HCT116 (cell line): ENCODE measurements at regions of chr4 and their contacts with region 1.

Region 1: GRCh38 chr4:48546336-48546735 is 56.3 kb downstream of the ZAR1 start:
- DNase-seq: peak; percentile 12
- ATAC-seq: no peak
- H3K4me3 ChIP-seq: no peak overlapping the region
- H3K27ac ChIP-seq: no peak overlapping the region
- H3K4me1 ChIP-seq: no peaks in the 10 kb centered on the region
- H3K27me3 ChIP-seq: no peaks in the 10 kb centered on the region
- CTCF ChIP-seq: peak; percentile 47 to 66 (median 59); a peak in 4 of 6 replicates
- POLR2A ChIP-seq: no peak
- RAD21 ChIP-seq: peak; percentile 76

Region 2: DNA sequence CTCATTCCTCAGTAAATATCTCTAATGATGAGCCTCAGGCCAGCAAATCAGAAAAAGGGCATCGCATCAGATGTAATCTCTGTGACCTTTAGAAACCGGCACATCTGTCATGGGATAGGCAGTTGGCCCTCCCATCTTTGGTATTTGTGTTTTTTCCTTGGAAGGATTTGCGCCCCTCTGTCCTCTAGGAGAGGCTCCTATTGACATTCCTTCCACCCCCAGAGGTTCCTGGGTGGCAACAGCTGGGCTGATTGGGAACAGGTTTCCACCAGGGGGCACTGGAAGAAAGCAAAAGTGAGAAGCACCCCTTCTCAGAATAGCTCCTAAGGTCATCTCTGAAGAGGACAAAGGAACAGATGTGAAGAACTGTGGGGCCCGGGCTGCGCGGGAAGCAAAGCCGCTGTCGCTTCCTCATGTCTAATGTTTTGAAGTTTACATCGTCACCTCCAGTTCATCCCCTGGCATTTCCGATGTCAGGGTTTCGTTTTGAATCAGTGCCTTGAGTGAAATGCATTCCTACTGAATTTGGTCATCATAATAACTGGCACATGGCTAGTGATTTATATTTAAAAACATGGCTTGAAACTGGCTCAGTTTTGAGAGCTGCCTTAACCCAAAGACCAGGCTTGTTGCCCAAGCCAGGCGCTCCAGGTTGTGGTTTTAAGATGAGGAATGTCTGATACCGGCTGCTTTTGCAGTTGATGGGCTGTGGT is 418.5 kb before region 1 on chr4:
- CTCF ChIA-PET with region 1: interaction called, 21 read pairs
- POLR2A ChIA-PET with region 1: no interaction called
- RAD21 ChIA-PET with region 1: interaction called in 1 of 2 experiments, 4 read pairs
- intact Hi-C with region 1: loop called (anchors 1 kb)
- DNase-seq: peak; percentile 72
- ATAC-seq: peak; percentile 88
- H3K4me3 ChIP-seq: peak overlapping the region in 1 of 2 experiments; percentile 32; a peak in 3 of 4 replicates
- H3K27ac ChIP-seq: peak overlapping the region; percentile 38; the same call in 1 of the 2 replicates
- H3K4me1 ChIP-seq: peaks cover 32 to 38% of the 10 kb centered on the region in 2 experiments
- H3K27me3 ChIP-seq: no peaks in the 10 kb centered on the region
- CTCF ChIP-seq: peak; percentile 72 to 84 (median 80)
- POLR2A ChIP-seq: no peak
- RAD21 ChIP-seq: peak; percentile 85

Region 3: DNA sequence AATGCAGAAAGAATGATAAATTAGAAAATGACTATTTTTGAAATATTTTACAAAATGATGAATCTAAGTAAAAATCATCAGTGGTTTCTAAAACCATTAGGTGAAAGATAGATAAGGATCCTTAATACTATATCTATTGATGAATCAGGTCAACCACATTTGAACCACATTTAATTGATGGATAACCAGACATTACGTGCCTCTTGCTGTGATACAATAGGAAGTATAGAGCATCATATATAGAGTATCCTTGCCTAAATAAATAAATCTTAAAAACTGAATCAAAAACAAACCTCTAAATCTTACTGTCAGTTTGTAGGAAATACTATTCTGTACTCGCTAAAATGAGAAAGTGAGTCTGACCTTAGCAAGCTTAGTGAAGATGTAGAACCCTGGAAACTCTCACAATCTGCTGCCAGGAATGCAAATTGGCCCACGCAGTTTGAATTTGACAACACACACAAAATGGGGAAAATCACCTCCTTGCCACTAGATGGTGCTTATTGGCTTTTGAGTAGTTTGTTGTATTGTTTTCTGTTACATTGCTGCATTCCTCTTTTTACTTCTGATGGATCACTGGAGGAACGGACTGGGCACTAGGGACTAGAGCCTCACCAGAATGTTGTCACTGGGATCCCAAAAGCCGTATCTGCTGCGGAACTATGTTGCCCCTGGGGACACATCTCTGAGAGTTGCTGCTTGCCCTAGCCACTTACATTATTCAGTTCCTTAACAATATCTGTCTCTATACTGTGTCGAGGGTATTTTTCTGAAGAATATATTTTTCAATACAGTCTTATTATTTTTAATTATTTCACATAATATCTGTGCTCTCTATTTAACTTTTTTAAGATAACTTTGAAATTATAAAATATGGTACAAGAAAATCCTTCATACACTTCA is 230.4 kb before region 1 on chr4:
- CTCF ChIA-PET with region 1: no interaction called
- POLR2A ChIA-PET with region 1: no interaction called
- RAD21 ChIA-PET with region 1: no interaction called
- intact Hi-C with region 1: loop called (anchors 1 kb)
- DNase-seq: peak; percentile 66
- ATAC-seq: peak; percentile 94
- H3K4me3 ChIP-seq: no peak overlapping the region
- H3K27ac ChIP-seq: no peak overlapping the region
- H3K4me1 ChIP-seq: no peaks in the 10 kb centered on the region
- H3K27me3 ChIP-seq: no peaks in the 10 kb centered on the region
- CTCF ChIP-seq: peak; percentile 53 to 77 (median 77); a peak in 5 of 6 replicates
- POLR2A ChIP-seq: no peak
- RAD21 ChIP-seq: peak; percentile 78

Region 4: DNA sequence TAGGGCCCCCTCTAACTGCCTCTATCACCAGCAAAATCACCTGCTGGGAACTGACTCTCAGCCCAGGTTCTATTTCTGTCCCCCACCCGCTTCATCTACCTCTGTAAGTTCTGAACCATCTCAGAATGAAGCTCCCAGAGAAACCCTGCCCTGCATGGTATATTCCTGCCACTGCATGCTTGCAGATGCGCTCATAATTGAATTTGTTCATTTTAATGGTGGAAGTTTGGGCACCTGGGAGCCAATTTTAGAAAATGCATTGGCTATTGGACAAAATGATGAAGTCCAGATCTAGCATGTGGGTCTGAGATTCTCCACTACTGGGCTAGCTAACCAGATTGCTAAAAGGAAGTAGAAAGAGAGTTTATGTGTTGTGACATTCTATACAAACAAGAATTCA is 91.7 kb before region 1 on chr4:
- CTCF ChIA-PET with region 1: interaction called, 4 read pairs
- POLR2A ChIA-PET with region 1: no interaction called
- RAD21 ChIA-PET with region 1: no interaction called
- intact Hi-C with region 1: loop called (anchors 2 kb)
- DNase-seq: no peak
- ATAC-seq: no peak
- H3K4me3 ChIP-seq: no peak overlapping the region
- H3K27ac ChIP-seq: no peak overlapping the region
- H3K4me1 ChIP-seq: no peaks in the 10 kb centered on the region
- H3K27me3 ChIP-seq: no peaks in the 10 kb centered on the region
- CTCF ChIP-seq: no peak
- POLR2A ChIP-seq: no peak
- RAD21 ChIP-seq: no peak

Region 5: DNA sequence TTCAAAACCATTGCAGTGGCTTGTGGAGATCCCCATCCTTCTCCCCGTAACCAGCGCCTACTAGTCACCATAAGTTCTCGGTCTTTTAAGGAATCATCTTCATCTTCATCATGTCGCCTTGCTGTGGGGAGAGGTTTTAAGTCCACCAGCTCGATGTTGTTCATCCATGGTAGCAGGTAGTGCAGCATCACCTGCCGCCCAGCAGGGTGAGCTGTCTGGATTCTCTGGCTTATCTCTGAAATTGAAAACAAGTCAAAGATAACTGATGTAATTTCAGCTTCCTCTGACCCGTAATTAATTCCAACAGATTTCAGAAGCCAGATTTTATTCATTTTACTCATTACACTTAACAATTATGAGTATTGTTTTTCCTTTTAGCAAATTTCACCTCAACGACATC is 11.1 kb after region 1 on chr4:
- CTCF ChIA-PET with region 1: interaction called, 10 read pairs
- POLR2A ChIA-PET with region 1: no interaction called
- RAD21 ChIA-PET with region 1: no interaction called
- intact Hi-C with region 1: no loop called
- DNase-seq: no peak
- ATAC-seq: peak; percentile 60; the same call in 1 of the 2 replicates
- H3K4me3 ChIP-seq: no peak overlapping the region
- H3K27ac ChIP-seq: no peak overlapping the region
- H3K4me1 ChIP-seq: no peaks in the 10 kb centered on the region
- H3K27me3 ChIP-seq: no peaks in the 10 kb centered on the region
- CTCF ChIP-seq: peak in 2 of 3 experiments; percentile 60 to 63; a peak in 4 of 6 replicates
- POLR2A ChIP-seq: no peak
- RAD21 ChIP-seq: peak; percentile 24; the same call in 1 of the 2 replicates